Activated CD4-positive, alpha-beta T cell treated with anti-CD3 and anti-CD28 coated beads for 36 hours (primary cell): ENCODE measurements at regions of chr21 and their contacts with region 1.

Region 1: DNA sequence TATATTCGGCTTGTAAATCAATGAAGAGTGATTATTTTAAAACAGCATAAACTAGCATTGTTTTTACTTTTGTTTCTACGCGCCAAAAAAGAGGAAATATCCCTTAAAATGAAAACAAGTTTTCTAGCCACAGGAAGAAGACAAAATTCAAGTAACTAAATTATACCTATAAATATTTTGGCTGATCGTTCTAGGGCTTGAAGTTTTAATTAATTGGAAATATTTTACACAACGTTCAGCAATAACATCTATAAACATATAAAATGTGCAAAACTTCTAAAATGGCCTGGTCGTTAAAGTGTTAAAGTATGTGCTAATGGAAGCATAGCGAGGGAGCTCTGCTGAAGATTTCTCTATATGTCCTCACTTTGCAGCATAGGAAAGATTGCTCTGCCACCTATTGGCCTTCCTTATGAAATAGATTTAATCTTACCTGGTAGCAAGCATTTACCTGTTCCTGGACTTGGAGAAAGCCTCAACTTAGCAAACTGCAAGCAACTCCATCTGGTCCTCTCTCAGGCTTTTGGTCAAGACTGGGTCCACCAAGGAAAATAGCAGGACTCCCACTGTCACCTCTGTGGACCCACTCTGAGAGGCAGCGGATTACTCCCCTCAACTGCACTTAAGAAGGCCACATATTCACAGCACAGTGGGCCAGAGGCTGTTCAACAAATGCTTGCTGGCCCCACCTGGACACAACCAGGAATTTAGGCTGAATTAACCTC is 351.3 kb upstream of the RUNX1 start:
- DNase-seq: peak; percentile 42
- ATAC-seq: peak; percentile 89
- H3K4me3 Mint-ChIP-seq: peak overlapping the region; percentile 33
- H3K27ac Mint-ChIP-seq: peak overlapping the region; percentile 82
- H3K4me1 Mint-ChIP-seq: peaks cover 28% of the 10 kb centered on the region
- H3K27me3 Mint-ChIP-seq: peaks cover 2% of the 10 kb centered on the region

Region 2: GRCh38 chr21:34693192-34693810 is 707.1 kb before region 1 on chr21:
- CTCF ChIA-PET with region 1: interaction called, 3 read pairs
- POLR2A ChIA-PET with region 1: no interaction called
- intact Hi-C with region 1: loop called (anchors 5 kb)
- DNase-seq: peak; percentile 71
- ATAC-seq: peak; percentile 60
- H3K4me3 Mint-ChIP-seq: no peak overlapping the region
- H3K27ac Mint-ChIP-seq: no peak overlapping the region
- H3K4me1 Mint-ChIP-seq: peaks cover 2% of the 10 kb centered on the region
- H3K27me3 Mint-ChIP-seq: peaks cover 13% of the 10 kb centered on the region

Region 3: GRCh38 chr21:35138665-35139381 is 261.6 kb before region 1 on chr21:
- CTCF ChIA-PET with region 1: no interaction called
- POLR2A ChIA-PET with region 1: no interaction called
- intact Hi-C with region 1: loop called in 1 of 2 experiments (anchors 2 kb)
- DNase-seq: peak; percentile 83
- ATAC-seq: peak; percentile 91
- H3K4me3 Mint-ChIP-seq: peak overlapping the region; percentile 65
- H3K27ac Mint-ChIP-seq: peak overlapping the region; percentile 93
- H3K4me1 Mint-ChIP-seq: peaks cover 38% of the 10 kb centered on the region
- H3K27me3 Mint-ChIP-seq: no peaks in the 10 kb centered on the region

Region 4: GRCh38 chr21:35172231-35172630 is 228.2 kb before region 1 on chr21:
- CTCF ChIA-PET with region 1: no interaction called
- POLR2A ChIA-PET with region 1: no interaction called
- intact Hi-C with region 1: no loop called
- DNase-seq: peak; percentile 17
- ATAC-seq: peak; percentile 44
- H3K4me3 Mint-ChIP-seq: no peak overlapping the region
- H3K27ac Mint-ChIP-seq: no peak overlapping the region
- H3K4me1 Mint-ChIP-seq: peaks cover 29% of the 10 kb centered on the region
- H3K27me3 Mint-ChIP-seq: no peaks in the 10 kb centered on the region

Region 5: GRCh38 chr21:35352066-35352770 is 48.2 kb before region 1 on chr21:
- CTCF ChIA-PET with region 1: interaction called, 4 read pairs
- POLR2A ChIA-PET with region 1: no interaction called
- intact Hi-C with region 1: loop called in 1 of 2 experiments (anchors 5 kb)
- DNase-seq: no peak
- ATAC-seq: no peak
- H3K4me3 Mint-ChIP-seq: no peak overlapping the region
- H3K27ac Mint-ChIP-seq: no peak overlapping the region
- H3K4me1 Mint-ChIP-seq: peaks cover 37% of the 10 kb centered on the region
- H3K27me3 Mint-ChIP-seq: peaks cover 5% of the 10 kb centered on the region

Region 6: GRCh38 chr21:35390013-35390776 is 10.2 kb before region 1 on chr21:
- CTCF ChIA-PET with region 1: interaction called, 16 read pairs
- POLR2A ChIA-PET with region 1: no interaction called
- intact Hi-C with region 1: no loop called
- DNase-seq: peak; percentile 22
- ATAC-seq: no peak
- H3K4me3 Mint-ChIP-seq: no peak overlapping the region
- H3K27ac Mint-ChIP-seq: peak overlapping the region; percentile 21
- H3K4me1 Mint-ChIP-seq: peaks cover 10% of the 10 kb centered on the region
- H3K27me3 Mint-ChIP-seq: no peaks in the 10 kb centered on the region